B cell (primary cell): ENCODE measurements at regions of chr2 and their contacts with region 1.

Region 1: GRCh38 chr2:233061591-233062450 is 1.7 kb downstream of the INPP5D start:
- DNase-seq: no peak
- ATAC-seq: peak; percentile 12
- H3K4me3 ChIP-seq: peak overlapping the region; percentile 91 to 99 (median 98)
- H3K4me3 Mint-ChIP-seq: peak overlapping the region; percentile 76
- H3K27ac ChIP-seq: peak overlapping the region; percentile 90 to 95
- H3K27ac Mint-ChIP-seq: peak overlapping the region; percentile 87
- H3K4me1 ChIP-seq: peaks cover 38 to 66% of the 10 kb centered on the region in 2 donors
- H3K4me1 Mint-ChIP-seq: peaks cover 56% of the 10 kb centered on the region
- H3K27me3 ChIP-seq: no peaks in the 10 kb centered on the region
- H3K27me3 Mint-ChIP-seq: no peaks in the 10 kb centered on the region
- CTCF ChIP-seq: peak; percentile 20

Region 2: DNA sequence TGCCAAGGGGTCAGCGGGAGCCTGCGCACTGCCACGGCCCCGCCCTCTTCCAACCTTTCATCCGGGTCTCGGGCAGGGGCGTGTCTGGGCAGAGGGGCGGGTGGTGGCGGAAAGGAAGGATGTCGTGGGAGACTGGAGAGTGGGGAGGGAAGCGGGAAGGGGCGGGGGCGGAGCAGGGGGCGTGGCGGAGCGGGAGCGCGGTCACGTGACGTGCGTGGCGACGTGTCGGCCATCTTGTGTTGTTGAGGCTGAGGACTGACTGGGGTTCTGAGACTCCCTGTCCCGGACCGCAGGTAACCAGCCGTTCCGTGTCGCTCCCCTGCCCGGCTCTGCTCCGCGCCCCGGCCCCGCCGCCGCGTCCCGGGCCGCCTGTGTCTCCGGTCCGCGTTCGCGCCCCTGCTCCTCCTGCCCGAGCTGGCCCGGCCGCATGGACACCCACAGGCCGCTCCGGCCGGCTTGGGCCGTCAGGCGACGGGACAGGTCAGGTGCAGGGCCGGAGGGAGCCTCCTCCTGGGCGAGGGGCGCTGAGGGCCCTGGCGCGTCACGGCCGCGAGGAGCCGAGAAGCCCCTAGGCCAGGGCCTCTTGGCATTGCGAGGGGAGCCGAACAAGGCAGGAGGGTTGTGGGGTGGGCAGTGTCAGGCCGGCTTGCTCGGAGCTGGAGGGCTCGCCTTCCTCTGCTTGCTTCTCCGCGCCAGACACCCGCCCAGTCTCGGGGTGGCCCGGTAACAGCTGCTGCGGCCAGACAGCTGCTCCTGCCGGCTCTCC is 364.5 kb before region 1 on chr2 and contains the start of gene GIGYF2:
- CTCF ChIA-PET with region 1: no interaction called
- POLR2A ChIA-PET with region 1: no interaction called
- intact Hi-C with region 1: loop called (anchors 5 kb)
- DNase-seq: peak; percentile 92
- ATAC-seq: peak; percentile 90
- H3K4me3 ChIP-seq: peak within 1 kb of the TSS; percentile 68 to 91 (median 84)
- H3K4me3 Mint-ChIP-seq: peak within 1 kb of the TSS; percentile 95
- H3K27ac ChIP-seq: peak within 1 kb of the TSS; percentile 60 to 92
- H3K27ac Mint-ChIP-seq: peak within 1 kb of the TSS; percentile 86
- H3K4me1 ChIP-seq: peaks cover 19 to 23% of the 10 kb centered on the region in 2 donors
- H3K4me1 Mint-ChIP-seq: peaks cover 38% of the 10 kb centered on the region
- H3K27me3 ChIP-seq: no peaks in the 10 kb centered on the region
- H3K27me3 Mint-ChIP-seq: no peaks in the 10 kb centered on the region
- CTCF ChIP-seq: no peak
- total RNA-seq, gene GIGYF2: 108 and 110 TPM in 2 replicates

Region 3: GRCh38 chr2:233075966-233076339 is 14.1 kb after region 1 on chr2:
- CTCF ChIA-PET with region 1: interaction called, 70 read pairs
- POLR2A ChIA-PET with region 1: interaction called, 112 read pairs
- intact Hi-C with region 1: loop called (anchors 1 kb)
- DNase-seq: peak; percentile 86
- ATAC-seq: peak; percentile 83
- H3K4me3 ChIP-seq: peak overlapping the region; percentile 8 to 53 (median 35)
- H3K4me3 Mint-ChIP-seq: no peak overlapping the region
- H3K27ac ChIP-seq: peak overlapping the region; percentile 77 to 87
- H3K27ac Mint-ChIP-seq: no peak overlapping the region
- H3K4me1 ChIP-seq: peaks cover 91% of the 10 kb centered on the region in 2 donors
- H3K4me1 Mint-ChIP-seq: peaks cover 50% of the 10 kb centered on the region
- H3K27me3 ChIP-seq: no peaks in the 10 kb centered on the region
- H3K27me3 Mint-ChIP-seq: no peaks in the 10 kb centered on the region
- CTCF ChIP-seq: no peak

Region 4: GRCh38 chr2:233100192-233100998 is 38.6 kb after region 1 on chr2:
- CTCF ChIA-PET with region 1: interaction called, 47 read pairs
- POLR2A ChIA-PET with region 1: interaction called, 69 read pairs
- intact Hi-C with region 1: loop called (anchors 1 kb)
- DNase-seq: peak; percentile 93
- ATAC-seq: peak; percentile 86
- H3K4me3 ChIP-seq: peak overlapping the region in 4 of 5 experiments; percentile 18 to 55 (median 40)
- H3K4me3 Mint-ChIP-seq: peak overlapping the region; percentile 83
- H3K27ac ChIP-seq: peak overlapping the region; percentile 96 to 98
- H3K27ac Mint-ChIP-seq: peak overlapping the region; percentile 97
- H3K4me1 ChIP-seq: peaks cover 79 to 83% of the 10 kb centered on the region in 2 donors
- H3K4me1 Mint-ChIP-seq: peaks cover 80% of the 10 kb centered on the region
- H3K27me3 ChIP-seq: no peaks in the 10 kb centered on the region
- H3K27me3 Mint-ChIP-seq: no peaks in the 10 kb centered on the region
- CTCF ChIP-seq: no peak

Region 5: DNA sequence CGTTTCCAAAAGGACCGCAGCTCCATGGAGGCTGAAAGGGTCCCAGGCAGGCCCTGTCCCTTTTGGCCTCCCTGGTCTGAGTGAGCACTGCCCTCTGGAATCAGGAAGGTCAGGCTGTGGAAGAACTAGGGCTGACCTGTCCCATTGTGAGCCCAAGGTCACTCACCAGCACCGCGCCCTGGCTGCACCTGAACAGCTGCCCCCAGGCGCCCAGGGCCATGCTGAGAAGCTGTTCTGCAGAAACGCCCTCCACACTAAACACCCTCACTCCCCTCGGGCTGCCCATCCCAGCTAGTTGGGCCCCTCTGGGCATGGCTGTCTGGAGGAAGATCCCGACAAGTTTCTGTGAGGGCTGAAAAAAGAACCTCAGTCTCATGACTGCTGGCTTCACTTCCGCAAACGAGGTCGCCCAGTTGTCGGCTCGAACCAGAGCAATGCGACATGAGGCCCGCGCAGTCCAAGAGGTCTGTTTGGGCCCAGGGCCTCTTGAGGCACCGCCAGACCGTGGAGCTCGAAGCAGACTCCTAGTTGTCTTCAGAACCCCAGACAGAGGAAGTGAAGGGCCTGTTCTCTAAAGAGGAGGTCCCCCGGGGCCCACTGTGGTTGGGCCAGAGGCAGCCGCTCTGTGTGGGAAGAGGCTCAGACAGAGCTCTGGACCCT is 62.7 kb after region 1 on chr2:
- CTCF ChIA-PET with region 1: interaction called, 26 read pairs
- POLR2A ChIA-PET with region 1: interaction called, 38 read pairs
- intact Hi-C with region 1: loop called (anchors 1 kb)
- DNase-seq: peak; percentile 93
- ATAC-seq: peak; percentile 98
- H3K4me3 ChIP-seq: peak overlapping the region in 1 of 5 experiments; percentile 24
- H3K4me3 Mint-ChIP-seq: peak overlapping the region; percentile 82
- H3K27ac ChIP-seq: peak overlapping the region; percentile 80 to 97
- H3K27ac Mint-ChIP-seq: peak overlapping the region; percentile 95
- H3K4me1 ChIP-seq: peaks cover 35 to 50% of the 10 kb centered on the region in 2 donors
- H3K4me1 Mint-ChIP-seq: peaks cover 50% of the 10 kb centered on the region
- H3K27me3 ChIP-seq: no peaks in the 10 kb centered on the region
- H3K27me3 Mint-ChIP-seq: no peaks in the 10 kb centered on the region
- CTCF ChIP-seq: no peak

Region 6: GRCh38 chr2:233331536-233331935 is 269.7 kb after region 1 on chr2:
- CTCF ChIA-PET with region 1: no interaction called
- POLR2A ChIA-PET with region 1: no interaction called
- intact Hi-C with region 1: loop called (anchors 5 kb)
- DNase-seq: peak; percentile 96
- ATAC-seq: peak; percentile 91
- H3K4me3 ChIP-seq: peak overlapping the region in 2 of 5 experiments; percentile 19 to 32
- H3K4me3 Mint-ChIP-seq: peak overlapping the region; percentile 73
- H3K27ac ChIP-seq: peak overlapping the region; percentile 92 to 97
- H3K27ac Mint-ChIP-seq: peak overlapping the region; percentile 94
- H3K4me1 ChIP-seq: peaks cover 66 to 78% of the 10 kb centered on the region in 2 donors
- H3K4me1 Mint-ChIP-seq: peaks cover 79% of the 10 kb centered on the region
- H3K27me3 ChIP-seq: no peaks in the 10 kb centered on the region
- H3K27me3 Mint-ChIP-seq: no peaks in the 10 kb centered on the region
- CTCF ChIP-seq: no peak